ENCODE measurements at regions of chr10 and their contacts with region 1.

Region 1: DNA sequence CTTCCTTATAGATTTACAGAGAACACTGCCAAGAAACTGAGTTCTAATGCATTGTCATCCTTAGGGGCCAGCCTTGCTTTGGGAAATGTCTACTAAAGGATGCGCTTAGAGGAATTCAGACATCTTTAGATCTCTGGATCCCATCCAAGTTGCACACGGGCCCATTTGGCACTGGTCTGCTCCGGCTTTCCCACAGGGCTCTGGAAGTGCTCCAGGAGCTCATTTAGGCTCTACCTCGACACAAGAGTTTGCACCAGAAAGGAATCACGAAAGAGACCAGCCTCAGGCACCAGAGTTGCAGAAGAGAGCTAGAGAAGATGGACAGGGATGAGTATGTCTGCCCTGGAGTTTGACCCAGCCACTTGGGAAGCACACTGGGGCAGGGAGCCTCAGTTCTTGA is 150.1 kb upstream of the TMEM72 start:
- DNase-seq: no peak
- H3K4me3 ChIP-seq: no peak overlapping the region
- H3K27ac ChIP-seq: no peak overlapping the region
- H3K4me1 ChIP-seq: peaks cover 4% of the 10 kb centered on the region
- H3K27me3 ChIP-seq: no peaks in the 10 kb centered on the region
- CTCF ChIP-seq: no peak

Region 2: DNA sequence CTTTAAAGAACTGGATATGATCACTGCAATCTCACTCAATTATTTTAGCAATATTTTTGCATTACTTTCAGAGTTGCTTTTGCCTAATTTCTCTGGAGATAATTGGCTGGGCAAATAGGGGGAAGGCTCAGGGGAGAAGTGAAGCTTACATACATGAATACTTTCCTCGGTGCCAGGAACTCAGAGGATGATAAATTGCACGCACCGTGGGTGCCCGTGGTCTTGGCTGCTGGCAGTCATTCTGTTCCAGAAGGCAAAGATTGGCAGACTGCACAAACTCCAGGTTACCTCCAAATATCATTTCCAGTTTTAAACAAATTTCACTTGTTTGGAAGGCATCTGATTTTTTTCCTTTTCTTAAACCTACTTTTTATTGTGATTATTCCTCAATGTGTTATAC is 47.8 kb before region 1 on chr10:
- CTCF ChIA-PET with region 1: no interaction called
- dilution Hi-C with region 1: loop called (anchors 5 kb)
- in situ Hi-C with region 1: no loop called
- intact Hi-C with region 1: no loop called
- DNase-seq: no peak
- H3K4me3 ChIP-seq: no peak overlapping the region
- H3K27ac ChIP-seq: no peak overlapping the region
- H3K4me1 ChIP-seq: no peaks in the 10 kb centered on the region
- H3K27me3 ChIP-seq: no peaks in the 10 kb centered on the region
- CTCF ChIP-seq: no peak

Region 3: DNA sequence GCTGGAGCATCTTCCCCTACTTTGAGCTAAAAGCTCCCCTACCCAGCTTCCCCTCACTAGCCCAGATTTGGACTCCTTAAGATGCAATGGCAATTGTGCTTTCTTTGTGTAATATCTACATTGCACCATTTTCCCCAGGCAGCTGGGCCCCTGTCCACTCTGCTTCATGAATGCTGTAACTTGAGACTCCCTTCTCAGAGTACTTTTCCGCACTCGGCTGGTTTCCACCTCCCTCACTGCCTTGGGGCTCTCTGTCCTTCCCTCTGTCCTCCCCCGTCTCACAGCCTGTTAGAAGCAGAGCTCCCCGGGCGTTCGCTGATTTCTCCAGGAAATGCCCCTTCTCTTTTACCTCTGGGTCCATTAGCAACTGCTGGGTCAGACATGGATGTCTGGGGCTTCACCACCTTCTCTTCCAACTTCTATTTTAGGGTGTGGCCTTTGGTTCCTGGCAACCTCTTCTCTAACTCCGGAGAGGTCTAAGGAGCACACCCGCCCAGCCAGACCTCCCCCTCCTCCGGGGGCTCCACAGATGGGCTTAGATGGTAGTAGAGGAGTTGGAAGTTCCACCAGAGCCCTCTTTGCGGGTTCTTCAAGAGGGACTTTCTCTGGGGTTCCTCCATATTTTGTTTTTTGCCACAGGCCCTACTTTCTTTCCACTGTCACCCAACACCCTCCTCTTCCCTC is 147.1 kb after region 1 on chr10:
- CTCF ChIA-PET with region 1: no interaction called
- dilution Hi-C with region 1: no loop called
- in situ Hi-C with region 1: no loop called
- intact Hi-C with region 1: no loop called
- DNase-seq: no peak
- H3K4me3 ChIP-seq: no peak overlapping the region
- H3K27ac ChIP-seq: no peak overlapping the region
- H3K4me1 ChIP-seq: no peaks in the 10 kb centered on the region
- H3K27me3 ChIP-seq: peaks cover 4% of the 10 kb centered on the region
- CTCF ChIP-seq: no peak